H1 (cell line): ENCODE measurements at regions of chr6 and their contacts with region 1.

Region 1: GRCh38 chr6:152094992-152095592 is 287.6 kb downstream of the ESR1 start:
- DNase-seq: peak in 1 of 2 experiments; percentile 19
- H3K4me3 ChIP-seq: no peak overlapping the region
- H3K27ac ChIP-seq: no peak overlapping the region
- H3K4me1 ChIP-seq: peaks cover 0 to 4% (median 1%) of the 10 kb centered on the region in 4 experiments; a peak in 2 of 7 replicates
- H3K27me3 ChIP-seq: no peaks in the 10 kb centered on the region
- CTCF ChIP-seq: no peak
- EP300 ChIP-seq: no peak
- POLR2A ChIP-seq: no peak
- RAD21 ChIP-seq: no peak

Region 2: DNA sequence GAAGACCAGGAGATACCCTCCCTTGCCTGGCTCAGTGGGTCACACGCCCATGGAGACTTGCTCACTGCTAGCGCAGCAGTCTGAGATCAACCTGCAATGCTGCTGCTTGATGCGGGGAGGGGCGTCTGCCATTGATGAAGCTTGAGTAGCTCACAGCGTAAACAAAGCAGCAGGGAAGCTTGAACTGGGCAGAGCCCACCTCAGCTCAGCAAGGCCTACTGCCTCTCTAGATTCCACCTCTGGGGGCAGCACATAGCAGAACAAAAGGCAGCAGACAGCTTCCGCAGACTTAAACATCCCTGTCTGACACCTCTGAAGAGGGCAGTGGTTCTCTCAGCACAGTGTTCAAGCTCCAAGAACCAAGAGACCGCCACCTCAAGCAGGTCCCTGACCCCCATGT is 16.3 kb before region 1 on chr6:
- CTCF ChIA-PET with region 1: interaction called, 10 read pairs
- POLR2A ChIA-PET with region 1: no interaction called
- DNase-seq: peak; percentile 27 to 54
- H3K4me3 ChIP-seq: no peak overlapping the region
- H3K27ac ChIP-seq: no peak overlapping the region
- H3K4me1 ChIP-seq: 0 out of 7 replicates have a peak, but pooled peaks cover 0 to 2% (median 0%) of the 10 kb centered on the region in 4 experiments
- H3K27me3 ChIP-seq: no peaks in the 10 kb centered on the region
- CTCF ChIP-seq: peak; percentile 32 to 64 (median 48)
- EP300 ChIP-seq: no peak
- POLR2A ChIP-seq: no peak
- RAD21 ChIP-seq: peak; percentile 48 to 53

Region 3: DNA sequence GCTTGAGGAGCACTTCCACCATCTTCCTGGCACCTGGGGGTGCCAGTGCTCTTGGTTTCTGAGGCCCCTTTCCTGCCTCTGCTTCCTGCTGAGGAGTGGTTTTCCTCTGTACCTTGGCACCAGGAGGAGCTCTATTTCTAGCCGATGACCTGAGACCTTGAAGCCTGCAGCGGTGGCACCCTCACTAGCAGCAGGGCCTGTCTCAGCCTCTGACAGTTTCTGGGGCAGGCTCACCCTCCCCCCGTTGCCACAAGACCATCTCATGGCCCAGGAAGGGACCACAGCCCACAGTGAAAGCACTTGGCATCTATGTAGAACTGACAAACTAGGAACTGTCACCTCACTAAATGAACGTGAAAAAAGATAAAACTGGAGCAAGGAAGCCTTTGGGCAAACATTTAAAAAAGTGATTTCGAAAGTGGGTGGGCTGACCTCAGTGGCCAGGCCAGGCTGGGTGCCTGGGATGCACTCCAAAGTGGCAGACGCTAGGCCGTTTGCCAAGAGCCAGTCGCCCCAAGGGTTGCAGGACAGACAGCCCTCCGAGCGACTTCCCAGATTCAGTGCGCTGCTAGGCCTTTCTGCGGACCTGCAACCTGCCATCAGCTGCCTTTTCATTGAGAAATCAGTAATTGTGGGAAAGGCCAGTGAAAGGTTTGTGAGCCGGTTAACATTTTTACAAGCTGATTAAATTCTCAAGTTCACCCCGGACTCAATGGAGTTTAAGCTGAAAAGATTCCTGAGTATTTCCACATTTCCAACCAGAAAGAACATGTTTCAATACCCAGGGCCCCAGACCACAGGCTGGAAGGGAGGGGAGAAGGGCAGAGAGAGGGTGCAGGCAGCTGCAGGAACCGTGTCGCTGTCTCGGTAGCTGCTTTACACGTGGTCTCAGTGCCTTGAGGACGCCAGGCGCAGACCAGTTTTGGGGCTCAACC is 16.1 kb after region 1 on chr6:
- CTCF ChIA-PET with region 1: interaction called, 26 read pairs
- POLR2A ChIA-PET with region 1: no interaction called
- DNase-seq: no peak
- H3K4me3 ChIP-seq: no peak overlapping the region
- H3K27ac ChIP-seq: no peak overlapping the region
- H3K4me1 ChIP-seq: no peaks in the 10 kb centered on the region
- H3K27me3 ChIP-seq: no peaks in the 10 kb centered on the region
- CTCF ChIP-seq: no peak
- EP300 ChIP-seq: no peak
- POLR2A ChIP-seq: no peak
- RAD21 ChIP-seq: 0 out of 4 replicates have a peak, but pooled peaks of 1 of the 2 experiments have one; percentile 2